ENCODE measurements at regions of chr11 and their contacts with region 1.

Region 1: DNA sequence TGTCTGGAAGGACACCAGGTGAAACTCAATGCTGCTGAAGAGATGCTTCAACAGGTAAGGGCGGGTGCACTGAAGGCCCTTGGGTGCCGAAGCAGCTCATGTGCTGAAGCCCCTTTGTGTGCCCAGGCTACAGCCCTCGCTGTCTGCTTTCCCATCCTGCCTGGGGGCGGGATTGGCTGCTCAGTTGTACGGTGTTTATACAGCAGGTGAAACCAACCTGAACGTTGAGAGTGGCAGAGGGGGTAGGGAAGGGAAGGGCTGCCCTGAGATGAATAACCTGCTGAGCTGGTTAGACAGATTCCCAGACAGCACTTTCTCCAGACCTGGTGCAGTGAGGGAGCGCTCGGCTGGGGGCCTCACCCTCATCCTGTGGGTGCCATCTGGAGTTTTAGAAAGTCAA is 75.7 kb downstream of the CYB5R2 start:
- DNase-seq: peak; percentile 81
- H3K4me3 ChIP-seq: no peak overlapping the region
- H3K27ac ChIP-seq: peak overlapping the region; percentile 73 to 90 (median 80)
- H3K4me1 ChIP-seq: peaks cover 5 to 35% (median 17%) of the 10 kb centered on the region in 4 donors
- H3K27me3 ChIP-seq: no peaks in the 10 kb centered on the region
- CTCF ChIP-seq: no peak
- EP300 ChIP-seq: peak; percentile 64
- POLR2A ChIP-seq: peak; percentile 34

Region 2: GRCh38 chr11:5923794-5924193 is 1673.8 kb before region 1 on chr11:
- in situ Hi-C with region 1: no loop called
- intact Hi-C with region 1: no loop called
- DNase-seq: no peak
- H3K4me3 ChIP-seq: no peak overlapping the region
- H3K27ac ChIP-seq: no peak overlapping the region
- H3K4me1 ChIP-seq: no peaks in the 10 kb centered on the region
- H3K27me3 ChIP-seq: no peaks in the 10 kb centered on the region
- CTCF ChIP-seq: no peak
- EP300 ChIP-seq: no peak
- POLR2A ChIP-seq: no peak

Region 3: DNA sequence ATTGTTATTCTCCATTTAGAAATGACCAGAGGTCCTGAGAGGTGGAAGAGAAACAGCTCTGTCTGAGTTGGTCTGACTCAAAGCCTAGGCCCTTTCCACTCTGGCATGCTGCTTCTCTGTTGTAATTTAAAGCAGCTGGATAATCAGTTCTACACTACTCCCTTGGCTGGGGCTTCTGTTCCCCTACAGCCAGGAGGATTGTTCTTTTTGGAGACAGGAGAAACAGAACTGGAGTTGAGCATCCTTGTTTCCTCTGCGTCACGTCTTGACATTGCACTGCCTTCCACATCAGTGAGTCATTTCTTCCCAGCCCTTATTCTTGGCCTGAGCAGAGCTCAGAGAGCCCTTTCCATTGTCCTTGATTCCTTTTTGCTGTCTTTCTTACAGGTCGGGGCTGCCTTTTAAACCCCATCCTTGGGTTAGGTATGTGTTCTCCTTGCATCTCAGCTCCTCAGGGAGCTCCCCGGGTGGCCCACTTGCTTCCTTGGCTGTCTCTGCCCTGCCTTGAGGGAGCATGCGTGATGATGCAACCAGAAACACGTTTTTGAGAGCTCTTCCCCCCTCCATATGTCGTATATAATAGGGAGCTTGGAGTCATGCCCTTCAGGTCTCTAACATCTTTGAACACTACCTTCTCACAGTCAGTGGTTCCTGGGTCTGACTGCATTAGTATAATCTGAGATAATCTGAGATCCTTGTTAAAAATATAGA is 40.0 kb after region 1 on chr11:
- in situ Hi-C with region 1: no loop called
- intact Hi-C with region 1: loop called (anchors 1 kb)
- DNase-seq: no peak
- H3K4me3 ChIP-seq: no peak overlapping the region
- H3K27ac ChIP-seq: peak overlapping the region; percentile 11 to 80 (median 70)
- H3K4me1 ChIP-seq: peaks cover 7 to 34% (median 20%) of the 10 kb centered on the region in 4 donors
- H3K27me3 ChIP-seq: no peaks in the 10 kb centered on the region
- CTCF ChIP-seq: no peak
- EP300 ChIP-seq: no peak
- POLR2A ChIP-seq: no peak

Measured in transverse colon (tissue), 4 donors.